ENCODE measurements at regions of chr2 and their contacts with region 1.

Region 1: GRCh38 chr2:128379021-128380015 is 60.6 kb upstream of the HS6ST1 start:
- DNase-seq: no peak
- H3K4me3 ChIP-seq: no peak overlapping the region
- H3K27ac ChIP-seq: no peak overlapping the region
- H3K4me1 ChIP-seq: no peaks in the 10 kb centered on the region
- H3K27me3 ChIP-seq: no peaks in the 10 kb centered on the region
- CTCF ChIP-seq: no peak

Region 2: DNA sequence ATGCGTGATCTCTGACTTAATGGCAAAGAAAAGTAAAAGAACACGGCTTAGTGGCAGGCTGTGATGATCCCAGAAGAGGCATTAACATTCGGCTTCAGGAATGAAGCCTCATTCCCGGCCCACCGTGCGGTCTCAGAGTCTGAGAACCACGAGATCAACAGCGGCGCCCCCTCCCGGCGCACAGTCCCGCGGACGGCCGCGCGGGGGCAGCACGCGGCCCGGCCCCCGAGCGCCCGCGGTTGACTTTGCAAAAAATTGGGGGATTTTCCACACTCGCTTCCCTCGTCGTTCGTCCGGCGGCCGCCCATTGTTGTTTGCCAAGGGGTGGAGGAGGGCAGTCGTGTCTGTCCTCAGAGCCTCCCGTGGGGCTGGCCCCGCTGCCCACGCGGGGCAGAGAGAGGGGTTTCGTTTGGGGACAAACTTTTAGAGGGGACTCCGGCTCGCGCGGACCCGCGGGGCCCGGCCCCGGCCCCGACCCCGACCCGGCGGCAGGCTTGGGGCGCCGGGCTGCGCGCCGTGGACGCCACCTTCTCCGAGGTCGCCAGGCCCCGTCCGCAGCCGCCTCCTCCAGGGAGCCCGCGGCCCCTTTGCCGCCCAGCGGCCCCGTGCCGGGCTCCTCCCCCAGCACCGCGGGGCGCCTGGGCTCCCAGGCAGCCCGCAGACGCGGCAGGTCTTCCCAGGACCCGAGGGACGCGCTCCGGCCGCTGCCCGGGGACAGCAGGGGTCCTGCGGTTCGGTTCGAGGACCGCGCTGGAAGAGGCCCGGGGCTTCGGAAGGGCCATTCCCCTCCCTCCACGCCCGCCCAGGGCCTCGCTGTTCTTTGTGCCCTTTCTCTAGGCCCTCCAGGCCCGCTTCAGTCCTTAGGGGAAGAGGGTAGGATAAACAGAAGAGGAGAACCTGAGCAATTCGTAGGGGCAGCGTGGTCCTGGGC is 57.3 kb before region 1 on chr2:
- CTCF ChIA-PET with region 1: no interaction called
- POLR2A ChIA-PET with region 1: no interaction called
- intact Hi-C with region 1: no loop called
- DNase-seq: peak; percentile 66 to 85
- H3K4me3 ChIP-seq: peak overlapping the region; percentile 90
- H3K27ac ChIP-seq: peak overlapping the region; percentile 52; the same call in 1 of the 2 replicates
- H3K4me1 ChIP-seq: peaks cover 3% of the 10 kb centered on the region
- H3K27me3 ChIP-seq: no peaks in the 10 kb centered on the region
- CTCF ChIP-seq: peak; percentile 85

Region 3: GRCh38 chr2:128395640-128396499 is 16.6 kb after region 1 on chr2:
- CTCF ChIA-PET with region 1: interaction called, 10 read pairs
- POLR2A ChIA-PET with region 1: no interaction called
- intact Hi-C with region 1: no loop called
- DNase-seq: peak; percentile 49 to 98
- H3K4me3 ChIP-seq: no peak overlapping the region
- H3K27ac ChIP-seq: peak overlapping the region; percentile 59
- H3K4me1 ChIP-seq: peaks cover 24% of the 10 kb centered on the region
- H3K27me3 ChIP-seq: no peaks in the 10 kb centered on the region
- CTCF ChIP-seq: no peak

Measured in PC-9 (cell line).